GM12878 (cell line): ENCODE measurements at regions of chr9 and their contacts with region 1.

Region 1: DNA sequence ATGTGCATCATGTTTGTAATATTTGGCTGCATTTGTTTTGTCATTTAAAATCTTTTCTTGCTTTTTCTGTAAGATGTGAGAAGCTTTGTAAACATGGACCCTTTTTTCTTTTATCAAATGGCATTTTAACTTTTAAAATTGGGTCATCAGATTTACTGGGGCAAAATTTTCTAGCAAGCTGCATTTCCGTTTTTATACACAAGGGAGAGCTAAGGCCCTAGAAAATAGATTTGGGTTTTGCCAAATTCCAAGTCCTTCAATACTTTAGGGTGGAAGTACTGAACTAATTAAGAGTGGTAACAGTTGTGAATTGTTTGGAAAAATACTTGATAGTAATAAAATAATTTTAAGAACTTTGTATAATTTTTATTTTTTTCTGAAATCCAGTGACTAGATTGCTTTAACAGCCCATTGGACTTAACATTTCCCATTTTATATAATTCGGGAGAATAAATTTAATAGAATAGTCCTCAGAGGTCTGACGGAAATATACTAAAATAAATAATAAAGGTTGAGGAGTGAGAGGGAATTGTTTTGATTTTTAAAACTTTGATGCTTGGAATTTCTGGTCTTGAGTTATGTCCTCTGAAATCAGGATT is 117.4 kb downstream of the SMARCA2 start:
- DNase-seq: no peak
- ATAC-seq: peak; percentile 25; the same call in 1 of the 3 replicates
- H3K4me3 ChIP-seq: no peak overlapping the region
- H3K27ac ChIP-seq: no peak overlapping the region
- H3K4me1 ChIP-seq: no peaks in the 10 kb centered on the region
- H3K27me3 ChIP-seq: no peaks in the 10 kb centered on the region
- CTCF ChIP-seq: peak; percentile 51 to 58 (median 53)
- EP300 ChIP-seq: no peak
- POLR2A ChIP-seq: no peak
- RAD21 ChIP-seq: peak; percentile 69

Region 2: DNA sequence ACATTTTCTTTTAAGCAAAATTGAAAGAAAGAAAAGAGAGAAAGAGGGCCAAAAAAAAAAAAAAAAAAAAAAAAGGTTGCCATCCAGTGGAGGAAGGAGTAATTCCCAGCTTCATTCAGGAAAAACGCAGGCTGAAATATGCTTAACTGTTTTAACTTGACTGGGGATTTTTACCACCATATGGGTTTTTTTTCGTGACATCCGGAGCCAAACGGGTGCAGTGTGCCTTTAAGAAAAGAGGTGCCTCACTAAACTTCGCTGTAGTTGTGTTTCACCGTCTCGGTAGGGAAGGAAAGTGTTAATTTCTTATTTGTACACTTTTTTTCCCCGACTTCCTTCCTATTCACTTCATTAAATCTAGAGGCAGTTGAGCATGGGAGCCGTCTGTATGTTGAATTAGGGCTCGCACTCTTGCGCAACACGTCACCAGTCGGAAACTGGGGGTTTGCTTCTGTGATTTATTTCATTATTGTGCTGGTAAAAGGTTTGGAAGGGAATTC is 25.6 kb after region 1 on chr9:
- CTCF ChIA-PET with region 1: interaction called, 14 read pairs
- POLR2A ChIA-PET with region 1: no interaction called
- RAD21 ChIA-PET with region 1: interaction called, 5 read pairs
- SMC1A ChIA-PET with region 1: interaction called, 9 read pairs
- in situ Hi-C with region 1: no loop called
- intact Hi-C with region 1: no loop called
- DNase-seq: peak; percentile 39
- ATAC-seq: peak; percentile 78
- H3K4me3 ChIP-seq: peak overlapping the region; percentile 79
- H3K27ac ChIP-seq: peak overlapping the region; percentile 75
- H3K4me1 ChIP-seq: peaks cover 8% of the 10 kb centered on the region; the same call in 1 of the 2 replicates
- H3K27me3 ChIP-seq: no peaks in the 10 kb centered on the region
- CTCF ChIP-seq: no peak
- EP300 ChIP-seq: 0 out of 4 replicates have a peak, but pooled peaks of 1 of the 2 experiments have one; percentile 10
- POLR2A ChIP-seq: no peak
- RAD21 ChIP-seq: no peak

Region 3: DNA sequence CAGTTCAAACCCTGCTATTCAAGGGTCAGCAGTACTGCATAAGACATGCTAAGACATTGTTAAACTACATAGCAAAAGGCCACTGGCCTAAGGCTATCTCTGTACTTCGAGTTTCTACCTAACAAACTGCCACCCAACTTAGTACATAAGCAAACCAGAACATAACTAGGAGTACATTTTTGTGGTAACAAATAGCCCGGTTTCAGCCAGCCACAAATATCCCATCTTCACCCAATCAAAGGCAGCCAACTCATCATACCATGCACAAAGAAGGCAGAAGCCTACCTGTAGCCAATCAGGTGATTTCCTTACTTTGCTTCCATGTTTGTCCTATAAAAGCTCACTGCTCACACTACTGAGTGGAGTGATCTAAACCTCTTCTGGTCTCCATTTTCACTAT is 84.0 kb after region 1 on chr9:
- CTCF ChIA-PET with region 1: no interaction called
- POLR2A ChIA-PET with region 1: no interaction called
- RAD21 ChIA-PET with region 1: no interaction called
- SMC1A ChIA-PET with region 1: no interaction called
- in situ Hi-C with region 1: no loop called
- intact Hi-C with region 1: no loop called
- DNase-seq: no peak
- ATAC-seq: peak; percentile 48
- H3K4me3 ChIP-seq: no peak overlapping the region
- H3K27ac ChIP-seq: no peak overlapping the region
- H3K4me1 ChIP-seq: no peaks in the 10 kb centered on the region
- H3K27me3 ChIP-seq: no peaks in the 10 kb centered on the region
- CTCF ChIP-seq: no peak
- EP300 ChIP-seq: no peak
- POLR2A ChIP-seq: no peak
- RAD21 ChIP-seq: no peak

Region 4: GRCh38 chr9:2359821-2360505 is 227.4 kb after region 1 on chr9:
- CTCF ChIA-PET with region 1: no interaction called
- POLR2A ChIA-PET with region 1: no interaction called
- RAD21 ChIA-PET with region 1: no interaction called
- SMC1A ChIA-PET with region 1: no interaction called
- in situ Hi-C with region 1: no loop called
- intact Hi-C with region 1: no loop called
- DNase-seq: no peak
- ATAC-seq: no peak
- H3K4me3 ChIP-seq: no peak overlapping the region
- H3K27ac ChIP-seq: no peak overlapping the region
- H3K4me1 ChIP-seq: no peaks in the 10 kb centered on the region
- H3K27me3 ChIP-seq: no peaks in the 10 kb centered on the region
- CTCF ChIP-seq: no peak
- EP300 ChIP-seq: no peak
- POLR2A ChIP-seq: no peak
- RAD21 ChIP-seq: no peak